Adrenal gland (tissue), 19 donors: ENCODE measurements at regions of chr3 and their contacts with region 1.

Region 1: DNA sequence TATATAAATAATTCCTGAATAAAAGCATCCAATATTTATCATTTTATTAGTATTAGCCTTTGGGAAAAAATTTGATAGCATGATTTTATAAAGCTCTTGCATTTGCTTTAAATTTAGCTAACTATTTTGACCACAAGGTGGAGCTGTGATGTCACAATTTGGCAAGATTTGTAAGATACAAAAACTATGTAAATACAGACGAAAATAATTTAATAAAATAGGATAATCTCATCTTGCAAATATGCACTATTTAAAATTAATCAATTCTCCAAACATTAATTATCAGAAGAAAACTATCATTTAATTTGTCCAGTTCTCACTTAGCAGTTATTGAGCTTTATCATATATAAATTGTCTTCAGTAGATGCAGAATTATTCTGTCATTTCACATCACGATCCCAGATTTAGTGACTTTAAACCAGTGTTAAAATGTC is 95.4 kb downstream of the PLOD2 start:
- DNase-seq: peak in 4 of 7 donors; percentile 16 to 51 (median 42)
- H3K4me3 ChIP-seq: no peak overlapping the region
- H3K27ac ChIP-seq: no peak overlapping the region
- H3K4me1 ChIP-seq: peaks cover 0 to 4% of the 10 kb centered on the region in 2 donors
- H3K27me3 ChIP-seq: no peaks in the 10 kb centered on the region
- CTCF ChIP-seq: peak; percentile 60 to 84 (median 70)
- POLR2A ChIP-seq: no peak

Region 2: DNA sequence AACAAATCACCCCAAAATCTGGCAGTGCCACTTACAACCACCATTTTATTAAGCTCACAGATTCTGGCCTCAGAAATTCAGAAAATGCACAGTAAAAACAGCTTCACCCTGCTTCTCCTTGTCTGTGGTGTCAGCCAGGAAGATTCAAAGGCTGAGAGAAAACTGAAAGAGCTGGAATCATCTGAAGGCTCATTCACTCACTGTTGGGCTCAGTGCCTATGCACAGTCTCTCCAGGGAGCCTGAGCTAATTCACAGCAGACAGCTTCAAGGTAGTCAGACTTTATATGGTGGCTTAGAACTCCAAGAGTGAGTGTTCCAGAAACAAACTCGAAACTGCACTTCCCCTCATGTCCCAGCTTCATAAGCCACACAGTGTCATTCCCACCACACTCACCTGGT is 111.9 kb after region 1 on chr3:
- intact Hi-C with region 1: loop called in 1 of 2 experiments (anchors 10 kb)
- DNase-seq: no peak
- H3K4me3 ChIP-seq: no peak overlapping the region
- H3K27ac ChIP-seq: no peak overlapping the region
- H3K4me1 ChIP-seq: no peaks in the 10 kb centered on the region
- H3K27me3 ChIP-seq: no peaks in the 10 kb centered on the region
- CTCF ChIP-seq: no peak
- POLR2A ChIP-seq: no peak

Region 3: GRCh38 chr3:146189519-146190173 is 124.1 kb after region 1 on chr3:
- intact Hi-C with region 1: loop called in 1 of 2 experiments (anchors 5 kb)
- DNase-seq: peak; percentile 21 to 65 (median 24)
- H3K4me3 ChIP-seq: no peak overlapping the region
- H3K27ac ChIP-seq: no peak overlapping the region
- H3K4me1 ChIP-seq: no peaks in the 10 kb centered on the region
- H3K27me3 ChIP-seq: no peaks in the 10 kb centered on the region
- CTCF ChIP-seq: peak; percentile 73 to 82 (median 75)
- POLR2A ChIP-seq: no peak